Endothelial cell of umbilical vein (primary cell): ENCODE measurements at regions of chr2 and their contacts with region 1.

Region 1: GRCh38 chr2:39513641-39514094 is 76.6 kb upstream of the MAP4K3 start:
- DNase-seq: peak; percentile 98
- H3K4me3 ChIP-seq: no peak overlapping the region
- H3K27ac ChIP-seq: peak overlapping the region; percentile 80
- H3K4me1 ChIP-seq: peaks cover 54% of the 10 kb centered on the region
- H3K27me3 ChIP-seq: no peaks in the 10 kb centered on the region
- CTCF ChIP-seq: peak; percentile 68 to 83
- POLR2A ChIP-seq: no peak

Region 2: GRCh38 chr2:39445921-39446320 is 67.7 kb before region 1 on chr2:
- CTCF ChIA-PET with region 1: no interaction called
- POLR2A ChIA-PET with region 1: no interaction called
- dilution Hi-C with region 1: no loop called
- intact Hi-C with region 1: no loop called
- DNase-seq: no peak
- H3K4me3 ChIP-seq: no peak overlapping the region
- H3K27ac ChIP-seq: no peak overlapping the region
- H3K4me1 ChIP-seq: no peaks in the 10 kb centered on the region
- H3K27me3 ChIP-seq: no peaks in the 10 kb centered on the region
- CTCF ChIP-seq: no peak
- POLR2A ChIP-seq: no peak

Region 3: GRCh38 chr2:39469807-39470206 is 43.9 kb before region 1 on chr2:
- CTCF ChIA-PET with region 1: interaction called, 3 read pairs
- POLR2A ChIA-PET with region 1: no interaction called
- dilution Hi-C with region 1: no loop called
- intact Hi-C with region 1: loop called (anchors 1 kb)
- DNase-seq: peak; percentile 73
- H3K4me3 ChIP-seq: no peak overlapping the region
- H3K27ac ChIP-seq: peak overlapping the region; percentile 49
- H3K4me1 ChIP-seq: peaks cover 36% of the 10 kb centered on the region
- H3K27me3 ChIP-seq: no peaks in the 10 kb centered on the region
- CTCF ChIP-seq: no peak
- POLR2A ChIP-seq: no peak

Region 4: GRCh38 chr2:39494784-39495251 is 18.9 kb before region 1 on chr2:
- CTCF ChIA-PET with region 1: interaction called, 8 read pairs
- POLR2A ChIA-PET with region 1: interaction called, 4 read pairs
- dilution Hi-C with region 1: no loop called
- intact Hi-C with region 1: loop called (anchors 1 kb)
- DNase-seq: peak; percentile 92
- H3K4me3 ChIP-seq: no peak overlapping the region
- H3K27ac ChIP-seq: peak overlapping the region; percentile 54
- H3K4me1 ChIP-seq: peaks cover 21% of the 10 kb centered on the region
- H3K27me3 ChIP-seq: no peaks in the 10 kb centered on the region
- CTCF ChIP-seq: no peak
- POLR2A ChIP-seq: no peak

Region 5: DNA sequence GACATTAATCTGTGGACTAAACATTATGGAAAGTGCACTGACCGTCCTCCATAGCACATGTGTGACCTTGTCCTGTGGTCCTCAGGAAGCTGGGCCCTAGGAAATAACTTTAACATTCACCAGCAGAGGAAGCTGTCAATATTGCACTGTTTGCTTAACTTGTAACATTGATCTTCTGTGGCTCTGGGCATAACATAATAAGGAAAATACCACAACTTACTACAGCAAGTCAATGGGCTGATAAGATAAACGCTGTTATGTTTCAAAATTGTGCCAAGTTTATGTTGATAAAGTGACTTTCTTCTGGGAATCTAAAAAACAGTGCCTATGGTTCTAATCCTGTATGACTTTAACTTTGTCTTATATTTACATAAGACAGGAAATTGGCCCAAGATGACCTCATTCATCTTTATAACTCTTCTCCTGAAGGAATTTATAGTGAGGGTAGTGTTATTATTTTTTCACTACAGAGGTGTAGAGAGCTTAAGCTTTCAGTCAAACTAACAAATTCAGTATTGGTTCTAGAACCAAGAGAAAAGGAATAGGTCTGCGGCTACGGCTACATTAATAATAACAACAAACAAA is 37.1 kb after region 1 on chr2:
- CTCF ChIA-PET with region 1: interaction called, 4 read pairs
- POLR2A ChIA-PET with region 1: no interaction called
- dilution Hi-C with region 1: no loop called
- intact Hi-C with region 1: loop called (anchors 1 kb)
- DNase-seq: peak; percentile 78
- H3K4me3 ChIP-seq: no peak overlapping the region
- H3K27ac ChIP-seq: peak overlapping the region; percentile 57
- H3K4me1 ChIP-seq: peaks cover 20% of the 10 kb centered on the region
- H3K27me3 ChIP-seq: no peaks in the 10 kb centered on the region
- CTCF ChIP-seq: no peak
- POLR2A ChIP-seq: peak; percentile 42

Region 6: DNA sequence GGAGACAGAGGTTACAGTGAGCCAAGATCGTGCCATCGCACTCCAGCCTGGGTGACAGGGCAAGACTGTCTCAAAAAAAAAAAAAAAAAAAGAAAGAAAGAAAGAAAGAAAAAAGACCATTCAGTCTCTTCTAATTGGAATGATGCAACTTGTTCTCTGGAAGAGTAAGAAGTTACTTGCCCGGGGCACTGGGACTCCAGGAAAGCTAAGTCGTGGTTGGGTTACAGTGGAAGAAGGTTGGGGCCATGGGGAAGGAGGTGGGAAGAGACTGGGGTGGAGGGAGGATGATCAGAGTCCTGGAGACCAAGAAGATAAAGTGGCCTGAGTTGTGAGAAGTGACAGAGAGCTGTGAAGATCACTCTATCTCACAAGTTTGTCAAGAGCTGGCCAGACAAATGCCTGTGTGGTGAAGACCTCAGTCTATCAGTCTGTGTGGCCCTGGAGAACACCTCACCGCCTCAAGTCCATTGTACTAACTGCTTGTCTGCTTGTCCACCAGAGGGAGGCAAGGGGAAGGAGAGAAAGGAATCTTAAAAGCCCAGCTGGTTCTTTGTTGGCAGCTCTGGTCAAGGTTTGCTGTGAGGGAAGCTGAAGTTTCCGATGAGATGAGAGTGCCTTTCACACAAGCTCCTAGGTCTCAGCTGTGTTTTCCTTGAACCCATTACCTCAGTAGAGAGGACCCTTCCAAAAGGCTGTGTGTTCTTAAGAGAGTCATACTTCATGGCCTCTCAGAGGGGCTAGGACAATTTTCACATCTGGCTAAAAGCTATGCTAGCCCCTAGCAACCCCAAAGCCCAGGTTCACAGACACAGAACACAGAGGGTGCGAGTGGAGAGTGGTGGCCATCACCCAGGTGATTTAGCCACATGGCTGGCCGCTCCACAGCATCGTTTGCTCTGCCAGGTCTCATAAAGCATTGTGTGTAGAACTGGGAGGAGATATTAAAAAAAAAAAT is 80.0 kb after region 1 on chr2:
- CTCF ChIA-PET with region 1: interaction called, 20 read pairs
- POLR2A ChIA-PET with region 1: no interaction called
- dilution Hi-C with region 1: no loop called
- intact Hi-C with region 1: loop called (anchors 1 kb)
- DNase-seq: peak; percentile 74
- H3K4me3 ChIP-seq: no peak overlapping the region
- H3K27ac ChIP-seq: no peak overlapping the region
- H3K4me1 ChIP-seq: no peaks in the 10 kb centered on the region
- H3K27me3 ChIP-seq: no peaks in the 10 kb centered on the region
- CTCF ChIP-seq: peak; percentile 48 to 71
- POLR2A ChIP-seq: no peak

Region 7: GRCh38 chr2:39728941-39729351 is 215.3 kb after region 1 on chr2:
- CTCF ChIA-PET with region 1: interaction called, 32 read pairs
- POLR2A ChIA-PET with region 1: no interaction called
- dilution Hi-C with region 1: no loop called
- intact Hi-C with region 1: loop called (anchors 1 kb)
- DNase-seq: peak; percentile 17
- H3K4me3 ChIP-seq: no peak overlapping the region
- H3K27ac ChIP-seq: no peak overlapping the region
- H3K4me1 ChIP-seq: peaks cover 6% of the 10 kb centered on the region
- H3K27me3 ChIP-seq: peaks cover 0 to 2% of the 10 kb centered on the region in 2 experiments
- CTCF ChIP-seq: peak; percentile 77 to 88
- POLR2A ChIP-seq: no peak

Region 8: DNA sequence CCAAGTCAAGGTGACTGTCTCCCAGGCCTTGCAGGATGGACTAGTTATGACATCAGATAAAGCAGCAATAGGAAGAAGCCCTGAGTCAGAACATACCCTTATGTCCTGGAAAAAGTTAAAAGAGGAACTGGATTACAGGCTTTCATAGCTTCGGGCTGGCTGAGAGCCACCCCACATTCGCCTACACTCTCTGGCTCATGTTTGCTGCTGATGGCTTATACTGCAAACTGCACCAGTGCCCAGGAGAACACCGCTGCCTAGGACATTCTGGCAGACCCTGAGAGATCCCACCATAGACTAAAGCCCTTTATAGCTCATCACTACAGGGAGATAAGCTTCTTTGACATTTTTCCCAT is 917.9 kb after region 1 on chr2:
- CTCF ChIA-PET with region 1: no interaction called
- POLR2A ChIA-PET with region 1: no interaction called
- dilution Hi-C with region 1: no loop called
- intact Hi-C with region 1: no loop called
- DNase-seq: no peak
- H3K4me3 ChIP-seq: no peak overlapping the region
- H3K27ac ChIP-seq: no peak overlapping the region
- H3K4me1 ChIP-seq: peaks cover 31% of the 10 kb centered on the region
- H3K27me3 ChIP-seq: no peaks in the 10 kb centered on the region
- CTCF ChIP-seq: no peak
- POLR2A ChIP-seq: no peak